ENCODE measurements at regions of chr17 and their contacts with region 1.

Region 1: DNA sequence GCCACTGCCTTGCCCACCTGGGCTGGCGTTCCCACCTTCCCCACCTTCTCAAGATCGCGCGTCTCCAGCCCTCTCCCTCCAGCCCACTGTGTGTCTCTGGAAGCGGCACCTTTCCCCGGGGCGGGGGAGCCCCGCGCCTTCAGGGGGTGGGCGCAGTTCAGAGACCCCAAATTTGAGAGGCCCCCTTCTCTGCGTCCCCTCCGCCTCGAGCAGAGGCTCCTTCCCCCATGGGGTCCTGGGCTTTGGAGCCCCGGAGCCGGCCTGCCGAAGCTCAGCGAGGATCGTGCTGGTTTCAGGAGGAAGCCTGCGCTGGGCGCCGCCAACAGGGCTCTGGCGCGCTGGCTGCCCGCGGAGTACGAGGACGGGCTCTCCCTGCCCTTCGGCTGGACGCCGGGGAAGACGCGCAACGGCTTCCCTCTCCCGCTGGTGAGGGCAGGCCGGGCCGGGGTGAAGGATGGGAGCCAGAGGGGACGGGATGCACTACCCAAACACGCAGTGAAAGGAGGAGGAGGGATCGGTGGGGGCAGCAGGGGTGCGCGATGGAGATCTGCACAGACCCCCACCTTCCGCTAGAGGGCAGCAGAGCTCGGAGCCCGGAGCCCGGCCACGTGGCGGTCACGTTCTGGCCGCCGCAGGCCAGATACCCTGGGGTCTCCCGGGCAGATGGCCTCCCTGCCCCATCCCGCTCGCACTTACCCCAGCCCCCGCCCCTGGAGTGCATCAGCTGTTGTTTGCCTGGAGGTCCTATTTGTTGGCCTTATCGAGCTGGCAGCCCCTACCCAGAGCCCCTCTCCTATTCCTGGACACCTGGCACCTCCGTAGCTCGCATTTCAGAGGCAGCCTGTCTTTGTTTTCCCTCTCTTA is 11.1 kb downstream of the LPO start:
- DNase-seq: no peak
- ATAC-seq: peak; percentile 97
- H3K4me3 ChIP-seq: peak overlapping the region; percentile 68; the same call in 1 of the 2 replicates
- H3K27ac ChIP-seq: no peak overlapping the region
- H3K4me1 ChIP-seq: peaks cover 6% of the 10 kb centered on the region
- H3K27me3 ChIP-seq: no peaks in the 10 kb centered on the region; a peak in 2 of 4 replicates
- CTCF ChIP-seq: peak; percentile 82 to 95 (median 87)
- EP300 ChIP-seq: no peak
- POLR2A ChIP-seq: no peak
- RAD21 ChIP-seq: peak; percentile 49

Region 2: GRCh38 chr17:57810721-57811637 is 438.5 kb before region 1 on chr17:
- CTCF ChIA-PET with region 1: no interaction called
- POLR2A ChIA-PET with region 1: no interaction called
- RAD21 ChIA-PET with region 1: no interaction called
- SMC1A ChIA-PET with region 1: no interaction called
- in situ Hi-C with region 1: no loop called
- intact Hi-C with region 1: no loop called
- DNase-seq: no peak
- ATAC-seq: no peak
- H3K4me3 ChIP-seq: no peak overlapping the region
- H3K27ac ChIP-seq: no peak overlapping the region
- H3K4me1 ChIP-seq: no peaks in the 10 kb centered on the region
- H3K27me3 ChIP-seq: peaks cover 2 to 12% of the 10 kb centered on the region in 2 experiments
- CTCF ChIP-seq: no peak
- EP300 ChIP-seq: no peak
- POLR2A ChIP-seq: no peak
- RAD21 ChIP-seq: no peak

Region 3: GRCh38 chr17:58219001-58219788 is 30.3 kb before region 1 on chr17 and contains the start of gene MKS1:
- CTCF ChIA-PET with region 1: interaction called, 12 read pairs
- POLR2A ChIA-PET with region 1: interaction called, 7 read pairs
- RAD21 ChIA-PET with region 1: interaction called, 6 read pairs
- SMC1A ChIA-PET with region 1: no interaction called
- in situ Hi-C with region 1: no loop called
- intact Hi-C with region 1: no loop called
- DNase-seq: peak; percentile 84
- ATAC-seq: peak; percentile 100
- H3K4me3 ChIP-seq: peak within 1 kb of the TSS; percentile 69
- H3K27ac ChIP-seq: peak within 1 kb of the TSS; percentile 63
- H3K4me1 ChIP-seq: peaks cover 12% of the 10 kb centered on the region
- H3K27me3 ChIP-seq: no peaks in the 10 kb centered on the region
- CTCF ChIP-seq: peak; percentile 73 to 83 (median 78)
- EP300 ChIP-seq: peak; percentile 14 to 34; a peak in 1 of 4 replicates
- POLR2A ChIP-seq: peak; percentile 94
- RAD21 ChIP-seq: 0 out of 2 replicates have a peak, but pooled peaks have one; percentile 6
- polyA plus RNA-seq, gene MKS1: 5.7 to 7.2 TPM

Region 4: GRCh38 chr17:58232707-58233156 is 16.8 kb before region 1 on chr17:
- CTCF ChIA-PET with region 1: interaction called, 78 read pairs
- POLR2A ChIA-PET with region 1: interaction called, 6 read pairs
- RAD21 ChIA-PET with region 1: interaction called, 13 read pairs
- SMC1A ChIA-PET with region 1: interaction called, 23 read pairs
- in situ Hi-C with region 1: no loop called
- intact Hi-C with region 1: no loop called
- DNase-seq: peak; percentile 87
- ATAC-seq: peak; percentile 92
- H3K4me3 ChIP-seq: peak overlapping the region; percentile 11; the same call in 1 of the 2 replicates
- H3K27ac ChIP-seq: peak overlapping the region; percentile 67
- H3K4me1 ChIP-seq: peaks cover 21% of the 10 kb centered on the region
- H3K27me3 ChIP-seq: no peaks in the 10 kb centered on the region; a peak in 1 of 4 replicates
- CTCF ChIP-seq: peak; percentile 6 to 24 (median 20); a peak in 1 of 6 replicates
- EP300 ChIP-seq: 0 out of 4 replicates have a peak, but pooled peaks of 1 of the 2 experiments have one; percentile 19
- POLR2A ChIP-seq: peak; percentile 56
- RAD21 ChIP-seq: 0 out of 2 replicates have a peak, but pooled peaks have one; percentile 12

Region 5: DNA sequence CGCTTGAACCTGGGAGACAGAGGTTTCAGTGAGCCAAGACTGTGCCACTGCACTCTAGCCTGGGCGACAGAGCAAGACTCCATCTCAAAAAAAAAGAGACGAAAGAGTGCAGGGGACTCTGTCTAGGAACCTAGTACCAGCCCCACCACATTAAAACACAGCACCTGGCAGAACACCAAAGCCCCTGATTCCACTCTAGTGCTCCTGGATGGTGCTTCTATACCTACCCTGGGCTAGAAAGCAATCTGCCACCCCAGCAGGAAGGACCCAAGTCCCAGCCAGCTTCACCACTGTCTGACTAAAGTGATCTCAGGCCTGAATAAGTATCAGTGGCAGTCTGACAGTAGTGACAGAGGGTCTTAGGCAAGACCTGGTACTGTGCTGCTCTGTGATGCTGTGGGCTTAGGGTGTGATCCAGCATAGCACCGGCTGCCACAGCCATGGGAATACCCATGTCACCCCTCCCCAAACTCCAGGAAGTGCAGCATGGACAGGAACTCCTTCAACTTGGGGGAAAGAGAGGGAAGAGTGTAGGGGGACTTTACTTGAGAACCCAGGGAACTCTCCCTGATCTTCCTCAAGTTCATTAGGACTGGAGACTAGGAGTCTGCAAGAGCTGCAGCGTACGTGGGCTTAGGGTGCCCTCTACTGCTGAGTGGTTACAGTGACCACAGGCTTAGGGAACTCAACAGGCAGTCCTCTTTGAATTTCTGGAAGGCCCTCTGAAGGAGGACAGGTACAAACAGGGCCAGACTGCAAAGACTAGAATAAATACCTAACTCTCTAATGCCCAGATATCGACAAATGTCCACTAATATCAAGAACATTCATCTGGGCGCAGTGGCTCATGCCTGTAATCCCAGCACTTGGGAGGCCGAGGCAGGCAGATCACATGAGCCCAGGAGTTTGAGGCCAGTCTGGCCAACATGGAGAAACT is 197.8 kb after region 1 on chr17:
- CTCF ChIA-PET with region 1: interaction called, 19 read pairs
- POLR2A ChIA-PET with region 1: no interaction called
- RAD21 ChIA-PET with region 1: interaction called, 3 read pairs
- SMC1A ChIA-PET with region 1: interaction called, 3 read pairs
- in situ Hi-C with region 1: no loop called
- intact Hi-C with region 1: loop called (anchors 1 kb)
- DNase-seq: peak; percentile 53
- ATAC-seq: peak; percentile 99
- H3K4me3 ChIP-seq: no peak overlapping the region
- H3K27ac ChIP-seq: no peak overlapping the region
- H3K4me1 ChIP-seq: no peaks in the 10 kb centered on the region
- H3K27me3 ChIP-seq: no peaks in the 10 kb centered on the region
- CTCF ChIP-seq: peak; percentile 84 to 93 (median 88); a peak in 5 of 6 replicates
- EP300 ChIP-seq: no peak
- POLR2A ChIP-seq: no peak
- RAD21 ChIP-seq: peak; percentile 99